ENCODE measurements at regions of chr12 and their contacts with region 1.

Region 1: GRCh38 chr12:109093022-109093918 is at the start of gene ALKBH2:
- DNase-seq: peak; percentile 92 to 96 (median 95)
- ATAC-seq: peak; percentile 57 to 78 (median 78)
- H3K4me3 ChIP-seq: peak within 1 kb of the TSS; percentile 4 to 69 (median 58)
- H3K27ac ChIP-seq: peak within 1 kb of the TSS in 11 of 12 donors; percentile 2 to 82 (median 53)
- H3K4me1 ChIP-seq: peaks cover 0 to 31% (median 24%) of the 10 kb centered on the region in 12 donors
- H3K27me3 ChIP-seq: no peaks in the 10 kb centered on the region
- CTCF ChIP-seq: peak; percentile 97 to 100 (median 99)
- POLR2A ChIP-seq: peak in 1 of 2 donors; percentile 37
- total RNA-seq, gene ALKBH2: 5.1 to 9.4 (median 7.1) TPM

Region 2: GRCh38 chr12:108562348-108563135 is 530.7 kb before region 1 on chr12 and contains the start of gene ISCU:
- intact Hi-C with region 1: loop called (anchors 1 to 10 kb)
- DNase-seq: peak; percentile 97 to 100 (median 98)
- ATAC-seq: peak; percentile 84 to 90 (median 88)
- H3K4me3 ChIP-seq: peak within 1 kb of the TSS; percentile 67 to 100 (median 89)
- H3K27ac ChIP-seq: peak within 1 kb of the TSS; percentile 84 to 98 (median 95)
- H3K4me1 ChIP-seq: peaks cover 7 to 81% (median 56%) of the 10 kb centered on the region in 12 donors
- H3K27me3 ChIP-seq: no peaks in the 10 kb centered on the region
- CTCF ChIP-seq: no peak
- POLR2A ChIP-seq: peak; percentile 86 to 98
- total RNA-seq, gene ISCU: 289 to 632 (median 497) TPM

Region 3: DNA sequence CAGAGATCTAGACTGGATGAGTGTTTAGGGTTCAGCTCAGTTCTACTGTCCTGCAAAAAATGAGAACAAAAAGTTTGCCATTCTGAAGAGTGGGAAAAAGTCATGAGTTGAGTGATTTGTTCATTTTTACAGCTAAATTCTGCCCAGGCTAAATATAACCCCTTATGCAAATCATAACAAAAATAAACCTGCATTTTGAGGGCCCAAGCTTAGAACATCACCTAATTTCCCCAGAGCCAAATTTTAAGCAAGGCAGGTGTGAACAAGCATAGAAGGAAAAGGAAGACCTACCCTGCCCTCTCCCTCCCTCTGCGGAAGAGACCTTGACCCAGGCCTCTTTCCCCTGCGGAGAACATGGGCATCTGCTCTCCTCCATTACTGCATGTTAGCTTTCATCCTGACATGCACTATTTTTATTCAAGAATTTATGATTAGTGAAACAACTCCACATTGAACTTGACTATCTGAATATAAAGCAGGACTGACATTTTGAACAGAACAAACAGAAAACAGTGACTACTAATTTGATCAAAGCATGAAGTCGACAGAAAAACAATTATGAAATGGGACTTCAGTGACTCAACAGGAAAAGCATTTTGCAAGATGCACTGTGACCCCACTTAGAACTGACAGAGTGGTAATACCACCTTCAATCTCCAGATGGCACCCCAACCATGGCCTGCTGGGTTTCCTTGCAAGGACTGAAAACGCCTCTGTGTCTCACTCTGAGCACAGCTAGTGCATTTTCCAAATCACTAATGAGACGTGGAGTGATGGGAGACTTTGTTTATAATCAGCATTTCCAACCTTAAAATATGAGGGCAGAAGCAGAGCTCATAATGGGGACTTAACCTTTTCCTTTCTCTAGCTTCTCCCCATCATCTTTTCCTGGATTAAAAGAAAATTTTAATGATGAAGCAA is 428.7 kb before region 1 on chr12:
- intact Hi-C with region 1: loop called in 5 of 10 experiments (anchors 10 kb)
- DNase-seq: peak; percentile 76 to 87 (median 84)
- ATAC-seq: peak; percentile 85 to 93 (median 92)
- H3K4me3 ChIP-seq: peak overlapping the region in 1 of 12 donors; percentile 12
- H3K27ac ChIP-seq: peak overlapping the region; percentile 62 to 88 (median 80)
- H3K4me1 ChIP-seq: peaks cover 17 to 60% (median 50%) of the 10 kb centered on the region in 12 donors
- H3K27me3 ChIP-seq: no peaks in the 10 kb centered on the region
- CTCF ChIP-seq: peak; percentile 88 to 98 (median 96)
- POLR2A ChIP-seq: peak in 1 of 2 donors; percentile 28

Region 4: DNA sequence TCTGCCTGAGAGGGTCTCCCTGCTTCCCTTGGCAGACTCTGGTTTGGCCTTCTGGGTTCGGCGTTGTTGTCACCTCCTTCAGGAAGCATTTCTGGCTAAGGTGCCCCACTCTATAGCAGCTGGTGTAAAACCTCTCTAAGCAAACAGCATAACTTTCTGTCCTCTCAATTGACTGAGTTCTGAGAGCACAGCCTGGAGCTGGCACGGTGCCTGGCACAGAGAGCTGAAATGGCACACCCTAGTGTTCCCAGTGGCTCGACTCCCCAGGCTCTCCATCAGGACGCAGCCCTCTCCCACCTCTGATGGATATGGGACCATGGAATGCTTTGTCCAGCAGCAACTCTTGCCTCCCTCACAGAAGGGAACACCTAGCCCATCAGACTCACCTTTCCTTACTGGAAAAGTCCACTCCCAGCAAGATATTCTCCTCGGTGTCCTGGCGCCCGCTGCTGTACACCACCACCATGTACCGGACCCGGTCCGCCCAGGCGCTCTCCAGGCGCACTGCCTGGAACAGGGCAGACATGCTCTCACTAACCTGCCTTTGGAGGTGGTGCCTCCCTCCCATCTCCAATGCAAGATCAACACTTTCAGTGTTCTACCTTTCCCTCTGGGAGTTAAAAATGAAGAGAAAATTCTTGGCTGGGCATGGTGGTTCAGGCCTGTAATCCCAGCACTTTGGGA is 276.5 kb before region 1 on chr12:
- intact Hi-C with region 1: loop called in 1 of 10 experiments (anchors 5 kb)
- DNase-seq: peak in 2 of 5 donors; percentile 70 to 78
- ATAC-seq: peak; percentile 45 to 71 (median 56)
- H3K4me3 ChIP-seq: no peak overlapping the region
- H3K27ac ChIP-seq: peak overlapping the region in 8 of 12 donors; percentile 33 to 62 (median 48)
- H3K4me1 ChIP-seq: peaks cover 5 to 79% (median 66%) of the 10 kb centered on the region in 12 donors
- H3K27me3 ChIP-seq: no peaks in the 10 kb centered on the region
- CTCF ChIP-seq: peak in 2 of 12 donors; percentile 6 to 14
- POLR2A ChIP-seq: no peak

Region 5: DNA sequence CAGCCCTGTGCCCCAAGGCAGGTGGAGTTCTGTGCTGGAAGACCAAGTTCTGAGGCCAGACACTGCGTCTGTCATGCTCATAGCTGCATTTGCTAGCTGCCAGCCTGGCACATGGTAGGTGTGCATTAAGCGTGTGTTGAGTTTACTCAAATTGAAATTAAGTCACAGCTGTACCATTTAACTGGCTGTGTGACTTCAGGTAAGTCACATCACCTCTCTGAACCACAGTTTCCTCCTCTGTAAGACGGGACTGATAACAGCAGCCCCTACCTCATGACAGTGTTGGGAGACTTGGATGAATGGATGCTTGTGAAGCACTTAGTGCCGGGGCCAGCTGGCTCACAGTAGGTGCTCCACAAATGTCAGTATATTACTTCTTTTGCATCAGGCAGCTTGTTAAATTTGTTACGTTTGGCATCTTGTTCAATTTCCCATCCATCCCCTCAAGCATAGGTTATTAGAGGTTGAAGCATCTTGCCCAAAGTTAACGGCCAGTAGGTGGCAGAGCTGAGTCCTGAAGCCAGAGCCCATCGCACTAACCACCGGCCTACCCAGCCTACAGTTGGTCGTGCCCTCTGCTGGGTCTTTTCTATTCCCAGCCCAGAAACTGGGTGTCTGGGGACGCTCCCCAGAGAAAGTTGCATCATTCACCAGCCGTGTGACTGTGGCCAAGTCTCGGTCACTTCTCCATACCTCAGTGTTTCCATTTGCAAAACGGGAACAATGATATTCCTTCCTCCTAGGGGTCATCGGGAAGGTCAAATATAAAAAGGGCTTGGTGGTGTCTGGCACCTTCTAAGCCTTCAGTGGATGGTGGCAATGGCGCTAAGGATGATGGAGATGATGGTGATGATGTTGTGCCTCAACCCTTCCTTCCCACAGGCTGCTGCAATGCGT is 208.9 kb before region 1 on chr12:
- intact Hi-C with region 1: loop called in 3 of 10 experiments (anchors 10 kb)
- DNase-seq: peak; percentile 31 to 70 (median 58)
- ATAC-seq: peak in 3 of 4 donors; percentile 29 to 76 (median 63)
- H3K4me3 ChIP-seq: no peak overlapping the region
- H3K27ac ChIP-seq: no peak overlapping the region
- H3K4me1 ChIP-seq: peaks cover 0 to 13% (median 0%) of the 10 kb centered on the region in 12 donors
- H3K27me3 ChIP-seq: no peaks in the 10 kb centered on the region
- CTCF ChIP-seq: peak; percentile 28 to 64 (median 50)
- POLR2A ChIP-seq: no peak

Region 6: DNA sequence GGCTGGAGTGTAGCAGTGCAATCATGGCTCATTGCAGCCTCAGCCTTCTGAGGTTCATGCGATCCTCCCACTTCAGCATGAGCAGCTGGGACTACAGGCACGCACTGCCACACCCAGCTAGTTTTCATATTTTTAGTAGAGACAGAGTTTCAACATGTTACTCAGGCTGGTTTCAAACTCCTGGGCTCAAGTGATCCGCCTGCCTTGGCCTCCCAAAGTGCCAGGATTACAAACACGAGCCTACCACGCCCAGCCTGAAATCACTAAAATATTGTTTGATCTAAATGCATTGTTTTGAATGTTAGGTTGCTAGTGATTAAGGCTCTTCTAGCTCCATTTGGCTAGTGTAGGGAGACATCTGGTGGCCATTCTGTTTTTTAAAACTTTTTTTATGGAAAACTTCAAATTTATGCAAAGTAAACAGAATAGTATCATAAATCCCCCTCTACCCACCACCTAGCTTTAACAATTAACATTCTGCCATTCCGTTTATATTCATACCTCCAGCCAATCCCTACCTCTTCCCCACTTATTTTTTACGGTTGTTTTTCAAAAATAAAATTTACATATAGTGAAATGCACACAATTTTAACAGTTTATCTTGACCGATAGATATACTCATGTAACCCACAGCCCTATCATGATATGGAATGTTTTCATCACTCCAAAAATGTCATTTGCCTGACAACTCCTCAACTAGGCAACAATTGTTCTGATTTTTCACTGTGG is 292.2 kb after region 1 on chr12:
- intact Hi-C with region 1: loop called in 1 of 10 experiments (anchors 10 kb)
- DNase-seq: peak in 1 of 5 donors; percentile 27
- ATAC-seq: peak in 3 of 4 donors; percentile 44 to 80 (median 69)
- H3K4me3 ChIP-seq: peak overlapping the region in 2 of 12 donors; percentile 17 to 31
- H3K27ac ChIP-seq: peak overlapping the region in 1 of 12 donors; percentile 27
- H3K4me1 ChIP-seq: peaks cover 0 to 6% (median 0%) of the 10 kb centered on the region in 12 donors
- H3K27me3 ChIP-seq: peaks cover 0 to 11% (median 0%) of the 10 kb centered on the region in 9 donors
- CTCF ChIP-seq: peak; percentile 25 to 69 (median 50)
- POLR2A ChIP-seq: no peak